ENCODE measurements at regions of chr3 and their contacts with region 1.

Region 1: GRCh38 chr3:68931406-68932149 is 769 bp downstream of the TAFA4 start:
- DNase-seq: peak; percentile 35
- ATAC-seq: peak; percentile 20
- H3K4me3 Mint-ChIP-seq: peak overlapping the region; percentile 81
- H3K27ac Mint-ChIP-seq: no peak overlapping the region
- H3K4me1 Mint-ChIP-seq: peaks cover 19% of the 10 kb centered on the region
- H3K27me3 Mint-ChIP-seq: peaks cover 40% of the 10 kb centered on the region
- CTCF ChIP-seq: no peak

Region 2: GRCh38 chr3:68706096-68706495 is 225.5 kb before region 1 on chr3:
- CTCF ChIA-PET with region 1: no interaction called
- POLR2A ChIA-PET with region 1: no interaction called
- DNase-seq: no peak
- ATAC-seq: no peak
- H3K4me3 Mint-ChIP-seq: no peak overlapping the region
- H3K27ac Mint-ChIP-seq: no peak overlapping the region
- H3K4me1 Mint-ChIP-seq: no peaks in the 10 kb centered on the region; the same call in 1 of the 2 replicates
- H3K27me3 Mint-ChIP-seq: no peaks in the 10 kb centered on the region
- CTCF ChIP-seq: no peak

Region 3: GRCh38 chr3:68878322-68878721 is 53.3 kb before region 1 on chr3:
- CTCF ChIA-PET with region 1: interaction called, 12 read pairs
- POLR2A ChIA-PET with region 1: no interaction called
- DNase-seq: no peak
- ATAC-seq: peak; percentile 56
- H3K4me3 Mint-ChIP-seq: no peak overlapping the region
- H3K27ac Mint-ChIP-seq: 0 out of 2 replicates have a peak overlapping the region, but pooled peaks have one; percentile 14
- H3K4me1 Mint-ChIP-seq: peaks cover 7% of the 10 kb centered on the region; the same call in 1 of the 2 replicates
- H3K27me3 Mint-ChIP-seq: no peaks in the 10 kb centered on the region
- CTCF ChIP-seq: peak; percentile 36; the same call in 1 of the 2 replicates

Region 4: GRCh38 chr3:68893600-68894239 is 37.9 kb before region 1 on chr3:
- CTCF ChIA-PET with region 1: interaction called, 44 read pairs
- POLR2A ChIA-PET with region 1: interaction called, 5 read pairs
- DNase-seq: no peak
- ATAC-seq: no peak
- H3K4me3 Mint-ChIP-seq: no peak overlapping the region
- H3K27ac Mint-ChIP-seq: no peak overlapping the region
- H3K4me1 Mint-ChIP-seq: peaks cover 24% of the 10 kb centered on the region
- H3K27me3 Mint-ChIP-seq: no peaks in the 10 kb centered on the region
- CTCF ChIP-seq: peak; percentile 47

Region 5: DNA sequence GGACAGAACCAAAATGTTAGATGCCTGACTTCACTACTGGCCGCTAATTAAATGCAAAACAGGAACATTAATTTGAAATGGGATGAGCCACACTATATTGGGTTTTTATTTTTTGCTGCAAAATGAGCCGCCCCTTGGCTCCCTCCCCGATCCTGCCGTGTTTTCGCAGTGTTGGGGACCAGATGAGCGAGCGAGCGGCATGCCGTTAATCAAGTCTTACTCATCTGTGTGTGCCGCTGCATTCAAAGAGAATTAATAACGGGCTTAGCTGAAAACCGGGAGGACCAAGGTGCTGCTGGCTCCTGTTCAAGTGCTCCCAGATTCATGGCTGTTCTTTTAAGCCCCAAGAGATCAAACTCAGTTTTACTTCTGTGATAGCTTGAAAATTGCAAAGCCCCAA is 19.2 kb before region 1 on chr3:
- CTCF ChIA-PET with region 1: interaction called, 12 read pairs
- POLR2A ChIA-PET with region 1: interaction called, 3 read pairs
- DNase-seq: no peak
- ATAC-seq: no peak
- H3K4me3 Mint-ChIP-seq: no peak overlapping the region
- H3K27ac Mint-ChIP-seq: no peak overlapping the region
- H3K4me1 Mint-ChIP-seq: peaks cover 26% of the 10 kb centered on the region
- H3K27me3 Mint-ChIP-seq: no peaks in the 10 kb centered on the region; the same call in 1 of the 2 replicates
- CTCF ChIP-seq: no peak

Region 6: GRCh38 chr3:68919000-68919399 is 12.6 kb before region 1 on chr3:
- CTCF ChIA-PET with region 1: interaction called, 14 read pairs
- POLR2A ChIA-PET with region 1: interaction called, 3 read pairs
- DNase-seq: peak; percentile 48
- ATAC-seq: peak; percentile 100
- H3K4me3 Mint-ChIP-seq: no peak overlapping the region
- H3K27ac Mint-ChIP-seq: no peak overlapping the region
- H3K4me1 Mint-ChIP-seq: peaks cover 13% of the 10 kb centered on the region
- H3K27me3 Mint-ChIP-seq: no peaks in the 10 kb centered on the region; the same call in 1 of the 2 replicates
- CTCF ChIP-seq: no peak

Region 7: GRCh38 chr3:68953816-68954444 is 22.4 kb after region 1 on chr3:
- CTCF ChIA-PET with region 1: interaction called, 13 read pairs
- POLR2A ChIA-PET with region 1: no interaction called
- DNase-seq: no peak
- ATAC-seq: peak; percentile 65
- H3K4me3 Mint-ChIP-seq: no peak overlapping the region
- H3K27ac Mint-ChIP-seq: peak overlapping the region; percentile 58
- H3K4me1 Mint-ChIP-seq: peaks cover 36% of the 10 kb centered on the region
- H3K27me3 Mint-ChIP-seq: no peaks in the 10 kb centered on the region
- CTCF ChIP-seq: no peak

Region 8: DNA sequence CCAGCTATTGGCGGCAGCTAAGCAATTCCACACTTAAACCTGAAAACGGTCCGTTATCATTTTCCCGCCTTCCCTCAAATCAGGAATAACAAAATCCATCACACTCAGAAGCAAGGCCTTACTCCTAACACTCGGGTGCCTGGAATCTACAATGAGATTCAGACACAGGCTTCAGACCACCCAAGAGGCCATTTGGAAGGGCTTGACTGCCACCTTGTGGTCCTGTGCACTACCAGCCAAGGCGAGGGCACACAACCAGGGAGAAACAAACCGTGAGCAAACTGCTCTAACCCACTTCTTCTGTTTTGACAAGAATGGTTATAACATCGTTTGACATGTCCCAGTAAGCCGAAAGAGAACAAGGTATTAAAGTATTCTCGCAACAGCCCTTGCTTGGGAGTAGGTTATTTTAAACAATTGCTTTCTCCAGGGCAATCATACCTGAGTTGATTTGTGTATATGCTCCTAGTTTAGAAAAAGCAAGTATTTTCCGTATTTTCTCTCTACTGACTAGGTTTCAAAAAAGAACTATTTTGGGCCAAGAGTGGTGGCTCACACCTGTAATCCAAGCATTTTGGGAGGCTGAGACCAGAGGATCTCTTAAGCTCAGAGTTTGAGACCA is 40.9 kb after region 1 on chr3:
- CTCF ChIA-PET with region 1: interaction called, 13 read pairs
- POLR2A ChIA-PET with region 1: no interaction called
- DNase-seq: peak; percentile 84
- ATAC-seq: peak; percentile 96
- H3K4me3 Mint-ChIP-seq: no peak overlapping the region
- H3K27ac Mint-ChIP-seq: no peak overlapping the region
- H3K4me1 Mint-ChIP-seq: peaks cover 9% of the 10 kb centered on the region
- H3K27me3 Mint-ChIP-seq: no peaks in the 10 kb centered on the region
- CTCF ChIP-seq: peak; percentile 63

Measured in WTC11 (cell line).